ENCODE measurements at regions of chr18 and their contacts with region 1.

Region 1: GRCh38 chr18:52070291-52070756 is 269.7 kb upstream of the DCC start:
- DNase-seq: no peak
- H3K4me3 Mint-ChIP-seq: no peak overlapping the region
- H3K27ac Mint-ChIP-seq: peak overlapping the region; percentile 79
- H3K4me1 Mint-ChIP-seq: peaks cover 8% of the 10 kb centered on the region
- H3K27me3 Mint-ChIP-seq: no peaks in the 10 kb centered on the region
- CTCF ChIP-seq: no peak

Region 2: GRCh38 chr18:51890762-51891161 is 179.6 kb before region 1 on chr18:
- CTCF ChIA-PET with region 1: no interaction called
- intact Hi-C with region 1: no loop called
- DNase-seq: peak; percentile 10
- H3K4me3 Mint-ChIP-seq: no peak overlapping the region
- H3K27ac Mint-ChIP-seq: peak overlapping the region; percentile 5
- H3K4me1 Mint-ChIP-seq: no peaks in the 10 kb centered on the region
- H3K27me3 Mint-ChIP-seq: peaks cover 12% of the 10 kb centered on the region
- CTCF ChIP-seq: no peak

Region 3: DNA sequence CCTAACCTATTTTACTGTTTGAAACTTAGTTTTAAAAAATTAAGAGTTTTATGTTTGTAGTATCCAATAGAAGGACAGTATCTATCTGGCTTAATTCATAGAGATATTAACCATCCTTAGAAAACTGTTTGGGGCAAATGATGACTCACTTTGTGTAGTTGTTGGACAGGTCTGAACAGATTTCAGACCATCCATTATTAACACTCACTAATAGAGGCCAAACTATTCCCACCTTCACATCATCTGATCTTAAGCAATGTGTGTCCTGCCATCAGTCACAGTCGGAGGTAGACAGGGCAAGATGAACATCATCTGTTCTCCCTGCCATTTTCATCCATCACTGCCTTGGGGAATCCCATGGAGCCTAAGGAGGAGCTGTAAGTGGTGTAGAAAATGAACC is 105.1 kb after region 1 on chr18:
- CTCF ChIA-PET with region 1: interaction called, 12 read pairs
- intact Hi-C with region 1: no loop called
- DNase-seq: no peak
- H3K4me3 Mint-ChIP-seq: no peak overlapping the region
- H3K27ac Mint-ChIP-seq: no peak overlapping the region
- H3K4me1 Mint-ChIP-seq: no peaks in the 10 kb centered on the region
- H3K27me3 Mint-ChIP-seq: no peaks in the 10 kb centered on the region
- CTCF ChIP-seq: no peak